B cell (primary cell): ENCODE measurements at regions of chr18 and their contacts with region 1.

Region 1: DNA sequence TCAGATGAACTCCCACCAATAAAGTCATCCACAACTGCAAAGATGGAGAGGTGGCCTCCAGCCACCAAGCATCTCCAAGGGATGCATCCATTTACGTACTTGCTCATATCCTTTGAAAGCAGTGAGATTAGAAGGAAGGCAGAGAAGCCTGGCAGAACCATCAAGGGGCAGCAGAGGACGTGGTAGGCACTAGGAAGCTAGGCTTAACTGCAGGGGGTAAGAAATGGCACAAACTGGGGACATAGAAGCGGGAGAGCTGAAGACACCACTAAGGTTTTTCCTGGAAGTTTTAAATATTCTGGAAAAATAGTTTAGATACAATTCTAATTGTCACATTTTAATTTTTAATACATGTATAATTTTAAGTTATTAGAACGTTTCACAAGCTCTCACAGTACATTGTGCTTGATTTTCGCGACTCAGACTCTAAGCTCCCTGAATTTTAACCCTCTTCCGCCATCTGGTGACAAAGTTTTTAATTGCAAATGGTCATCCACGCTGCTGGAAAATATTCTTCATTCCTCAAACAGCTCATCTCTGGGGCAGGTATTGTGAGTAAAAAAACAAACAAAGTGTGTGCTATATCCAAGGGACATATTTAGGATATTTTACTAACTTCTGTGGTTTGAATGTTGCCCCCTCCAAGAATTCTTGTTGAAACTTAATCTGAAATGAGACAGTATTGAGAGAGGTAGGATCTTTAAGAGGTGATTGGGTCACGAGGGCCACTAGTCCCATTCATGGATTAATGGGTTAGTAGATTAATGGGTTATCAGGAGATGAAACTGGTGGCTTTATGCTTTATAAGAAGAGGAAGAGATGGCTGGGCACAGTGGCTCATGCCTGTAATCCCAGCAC is 1.6 kb upstream of the PSTPIP2 start:
- DNase-seq: peak; percentile 69
- ATAC-seq: peak; percentile 54
- H3K4me3 ChIP-seq: no peak overlapping the region
- H3K4me3 Mint-ChIP-seq: no peak overlapping the region
- H3K27ac ChIP-seq: no peak overlapping the region
- H3K27ac Mint-ChIP-seq: no peak overlapping the region
- H3K4me1 ChIP-seq: peaks cover 17 to 26% of the 10 kb centered on the region in 2 donors
- H3K4me1 Mint-ChIP-seq: peaks cover 19% of the 10 kb centered on the region
- H3K27me3 ChIP-seq: peaks cover 0 to 34% (median 13%) of the 10 kb centered on the region in 4 experiments
- H3K27me3 Mint-ChIP-seq: peaks cover 6% of the 10 kb centered on the region
- CTCF ChIP-seq: peak; percentile 78

Region 2: DNA sequence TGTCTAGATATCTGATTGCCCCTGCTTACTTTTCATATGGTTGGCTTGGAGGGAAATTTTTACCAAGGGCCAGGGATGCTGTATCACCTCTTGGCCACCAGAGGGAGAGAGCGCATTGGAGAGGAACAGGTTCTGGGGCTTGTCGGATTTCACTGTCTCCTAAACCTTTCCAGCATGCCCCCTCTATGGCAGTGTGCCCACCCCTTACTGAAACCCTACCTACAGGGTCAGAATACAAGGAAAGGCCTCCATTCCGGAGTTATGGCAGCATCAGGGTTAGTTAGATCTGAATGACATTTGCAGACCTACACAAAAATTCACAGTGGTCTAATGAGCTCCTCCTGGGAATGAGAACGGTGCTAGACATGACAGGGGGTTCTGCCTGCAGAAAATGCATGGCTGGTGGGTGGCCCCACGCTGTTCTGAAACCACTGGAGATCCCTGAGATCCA is 452.6 kb before region 1 on chr18:
- CTCF ChIA-PET with region 1: interaction called, 5 read pairs
- POLR2A ChIA-PET with region 1: no interaction called
- intact Hi-C with region 1: loop called (anchors 1 kb)
- DNase-seq: peak; percentile 58
- ATAC-seq: peak; percentile 63
- H3K4me3 ChIP-seq: no peak overlapping the region
- H3K4me3 Mint-ChIP-seq: no peak overlapping the region
- H3K27ac ChIP-seq: no peak overlapping the region
- H3K27ac Mint-ChIP-seq: no peak overlapping the region
- H3K4me1 ChIP-seq: no peaks in the 10 kb centered on the region
- H3K4me1 Mint-ChIP-seq: peaks cover 1% of the 10 kb centered on the region
- H3K27me3 ChIP-seq: peaks cover 0 to 2% (median 0%) of the 10 kb centered on the region in 4 experiments
- H3K27me3 Mint-ChIP-seq: peaks cover 19% of the 10 kb centered on the region
- CTCF ChIP-seq: peak; percentile 99

Region 3: GRCh38 chr18:45920367-45920766 is 153.3 kb before region 1 on chr18:
- CTCF ChIA-PET with region 1: interaction called, 7 read pairs
- POLR2A ChIA-PET with region 1: no interaction called
- intact Hi-C with region 1: loop called (anchors 5 kb)
- DNase-seq: peak; percentile 14
- ATAC-seq: peak; percentile 63
- H3K4me3 ChIP-seq: no peak overlapping the region
- H3K4me3 Mint-ChIP-seq: no peak overlapping the region
- H3K27ac ChIP-seq: no peak overlapping the region
- H3K27ac Mint-ChIP-seq: no peak overlapping the region
- H3K4me1 ChIP-seq: peaks cover 9 to 12% of the 10 kb centered on the region in 2 donors
- H3K4me1 Mint-ChIP-seq: peaks cover 20% of the 10 kb centered on the region
- H3K27me3 ChIP-seq: no peaks in the 10 kb centered on the region
- H3K27me3 Mint-ChIP-seq: no peaks in the 10 kb centered on the region
- CTCF ChIP-seq: no peak

Region 4: GRCh38 chr18:46028536-46028891 is 45.2 kb before region 1 on chr18:
- CTCF ChIA-PET with region 1: no interaction called
- POLR2A ChIA-PET with region 1: no interaction called
- intact Hi-C with region 1: loop called (anchors 5 kb)
- DNase-seq: no peak
- ATAC-seq: no peak
- H3K4me3 ChIP-seq: peak overlapping the region; percentile 38 to 72 (median 60)
- H3K4me3 Mint-ChIP-seq: peak overlapping the region; percentile 91
- H3K27ac ChIP-seq: no peak overlapping the region
- H3K27ac Mint-ChIP-seq: no peak overlapping the region
- H3K4me1 ChIP-seq: peaks cover 0 to 14% of the 10 kb centered on the region in 2 donors
- H3K4me1 Mint-ChIP-seq: peaks cover 6% of the 10 kb centered on the region
- H3K27me3 ChIP-seq: peaks cover 0 to 19% (median 6%) of the 10 kb centered on the region in 4 experiments
- H3K27me3 Mint-ChIP-seq: peaks cover 12% of the 10 kb centered on the region
- CTCF ChIP-seq: no peak